ENCODE measurements at regions of chr10 and their contacts with region 1.

Region 1: DNA sequence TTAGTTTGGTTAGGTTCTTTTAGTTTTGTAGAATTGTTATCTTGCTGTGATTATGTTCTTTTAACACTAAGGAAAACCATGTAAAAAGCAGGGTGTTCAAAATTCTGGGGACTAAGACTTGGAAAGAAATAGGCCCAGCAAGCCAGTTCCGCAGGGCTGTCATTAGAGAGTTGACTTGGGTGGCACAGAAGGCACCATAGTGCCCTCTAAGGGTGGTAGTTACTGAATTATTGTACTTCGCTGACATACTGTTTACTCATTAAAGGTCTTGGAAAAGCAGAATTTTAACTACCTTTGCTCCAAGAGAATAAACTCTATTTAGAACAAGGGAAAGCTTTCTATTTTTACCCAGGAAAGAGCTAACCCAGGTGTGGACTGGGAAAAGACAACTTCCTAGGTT is 86.5 kb downstream of the OTUD1 start:
- DNase-seq: peak in 1 of 2 donors; percentile 18
- ATAC-seq: peak in 6 of 8 donors; percentile 55 to 84 (median 70)
- H3K4me3 ChIP-seq: no peak overlapping the region
- H3K27ac ChIP-seq: no peak overlapping the region
- H3K4me1 ChIP-seq: no peaks in the 10 kb centered on the region
- H3K27me3 ChIP-seq: no peaks in the 10 kb centered on the region
- CTCF ChIP-seq: peak; percentile 17 to 69 (median 60)

Region 2: GRCh38 chr10:23478570-23478969 is 46.8 kb before region 1 on chr10:
- intact Hi-C with region 1: no loop called
- DNase-seq: no peak
- ATAC-seq: no peak
- H3K4me3 ChIP-seq: no peak overlapping the region
- H3K27ac ChIP-seq: no peak overlapping the region
- H3K4me1 ChIP-seq: peaks cover 0 to 4% (median 0%) of the 10 kb centered on the region in 9 donors
- H3K27me3 ChIP-seq: no peaks in the 10 kb centered on the region
- CTCF ChIP-seq: no peak

Region 3: GRCh38 chr10:23581906-23582305 is 56.5 kb after region 1 on chr10:
- intact Hi-C with region 1: no loop called
- DNase-seq: no peak
- ATAC-seq: no peak
- H3K4me3 ChIP-seq: no peak overlapping the region
- H3K27ac ChIP-seq: no peak overlapping the region
- H3K4me1 ChIP-seq: no peaks in the 10 kb centered on the region
- H3K27me3 ChIP-seq: peaks cover 0 to 9% (median 0%) of the 10 kb centered on the region in 7 donors
- CTCF ChIP-seq: no peak

Region 4: GRCh38 chr10:23656735-23657134 is 131.3 kb after region 1 on chr10:
- intact Hi-C with region 1: loop called in 1 of 10 experiments (anchors 10 kb)
- DNase-seq: no peak
- ATAC-seq: no peak
- H3K4me3 ChIP-seq: no peak overlapping the region
- H3K27ac ChIP-seq: no peak overlapping the region
- H3K4me1 ChIP-seq: no peaks in the 10 kb centered on the region
- H3K27me3 ChIP-seq: peaks cover 0 to 15% (median 0%) of the 10 kb centered on the region in 7 donors
- CTCF ChIP-seq: peak in 8 of 9 donors; percentile 9 to 66 (median 50)

Region 5: GRCh38 chr10:23702977-23703414 is 177.6 kb after region 1 on chr10:
- intact Hi-C with region 1: loop called in 1 of 10 experiments (anchors 10 kb)
- DNase-seq: peak in 1 of 2 donors; percentile 47
- ATAC-seq: peak in 5 of 8 donors; percentile 58 to 83 (median 73)
- H3K4me3 ChIP-seq: no peak overlapping the region
- H3K27ac ChIP-seq: no peak overlapping the region
- H3K4me1 ChIP-seq: peaks cover 0 to 5% (median 0%) of the 10 kb centered on the region in 9 donors
- H3K27me3 ChIP-seq: peaks cover 0 to 41% (median 14%) of the 10 kb centered on the region in 7 donors
- CTCF ChIP-seq: peak; percentile 37 to 73 (median 67)